ENCODE measurements at regions of chr9 and their contacts with region 1.

Region 1: GRCh38 chr9:21965401-21965951 is 28.7 kb downstream of the CDKN2A start:
- DNase-seq: peak in 7 of 14 experiments; percentile 17 to 72 (median 27)
- ATAC-seq: peak; percentile 60
- H3K4me3 ChIP-seq: peak overlapping the region; percentile 36
- H3K4me3 Mint-ChIP-seq: peak overlapping the region; percentile 59
- H3K27ac ChIP-seq: no peak overlapping the region
- H3K27ac Mint-ChIP-seq: peak overlapping the region; percentile 53
- H3K4me1 ChIP-seq: peaks cover 35% of the 10 kb centered on the region
- H3K4me1 Mint-ChIP-seq: peaks cover 28% of the 10 kb centered on the region
- H3K27me3 ChIP-seq: peaks cover 71 to 87% of the 10 kb centered on the region in 2 experiments
- H3K27me3 Mint-ChIP-seq: peaks cover 97% of the 10 kb centered on the region
- CTCF ChIP-seq: no peak

Region 2: DNA sequence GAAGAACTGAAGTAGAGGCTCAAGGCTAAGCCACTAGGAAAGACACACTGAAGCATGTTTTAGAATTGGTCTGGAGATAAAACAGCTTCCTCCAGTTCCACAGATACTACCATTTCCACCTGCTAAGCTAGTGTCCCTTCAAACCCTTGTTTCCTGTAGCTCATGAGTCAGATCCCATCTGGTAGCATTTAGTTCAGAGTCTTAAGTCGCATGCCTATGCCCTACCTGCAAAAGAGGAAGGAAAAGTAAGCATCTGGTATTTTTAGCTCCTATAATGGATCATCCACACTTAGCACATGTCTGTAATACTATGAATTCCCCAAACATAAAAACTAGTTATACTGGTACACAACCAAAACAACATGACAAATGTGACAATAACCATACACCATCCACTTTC is 63.3 kb before region 1 on chr9:
- CTCF ChIA-PET with region 1: no interaction called
- POLR2A ChIA-PET with region 1: no interaction called
- intact Hi-C with region 1: no loop called
- DNase-seq: no peak
- ATAC-seq: no peak
- H3K4me3 ChIP-seq: no peak overlapping the region
- H3K4me3 Mint-ChIP-seq: no peak overlapping the region
- H3K27ac ChIP-seq: no peak overlapping the region
- H3K27ac Mint-ChIP-seq: no peak overlapping the region
- H3K4me1 ChIP-seq: no peaks in the 10 kb centered on the region
- H3K4me1 Mint-ChIP-seq: no peaks in the 10 kb centered on the region
- H3K27me3 ChIP-seq: no peaks in the 10 kb centered on the region
- H3K27me3 Mint-ChIP-seq: no peaks in the 10 kb centered on the region
- CTCF ChIP-seq: no peak

Region 3: DNA sequence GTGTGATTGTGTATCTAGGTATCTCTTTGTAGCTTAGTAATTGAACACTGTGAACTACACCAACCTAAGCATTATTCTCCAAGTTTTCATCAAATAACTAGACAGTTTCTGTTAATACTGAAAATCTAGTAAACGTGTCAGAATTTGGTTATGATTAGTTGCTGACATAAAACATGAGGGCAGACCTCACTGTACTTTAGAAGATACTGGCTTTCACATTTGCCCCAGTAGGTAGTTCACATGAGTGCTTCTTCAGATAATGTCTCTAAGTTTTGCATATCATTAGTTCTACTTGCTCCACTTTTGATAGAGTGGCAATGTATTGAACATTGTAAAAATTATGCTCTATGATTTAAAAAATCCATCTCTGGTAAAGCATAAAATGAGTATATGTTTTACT is 36.6 kb after region 1 on chr9:
- CTCF ChIA-PET with region 1: no interaction called
- POLR2A ChIA-PET with region 1: no interaction called
- intact Hi-C with region 1: loop called (anchors 5 kb)
- DNase-seq: no peak
- ATAC-seq: no peak
- H3K4me3 ChIP-seq: no peak overlapping the region
- H3K4me3 Mint-ChIP-seq: no peak overlapping the region
- H3K27ac ChIP-seq: no peak overlapping the region
- H3K27ac Mint-ChIP-seq: no peak overlapping the region
- H3K4me1 ChIP-seq: peaks cover 12% of the 10 kb centered on the region
- H3K4me1 Mint-ChIP-seq: peaks cover 8% of the 10 kb centered on the region
- H3K27me3 ChIP-seq: peaks cover 26 to 58% of the 10 kb centered on the region in 2 experiments
- H3K27me3 Mint-ChIP-seq: peaks cover 72% of the 10 kb centered on the region
- CTCF ChIP-seq: no peak

Measured in CD4-positive, alpha-beta T cell (primary cell).